HepG2 (cell line): ENCODE measurements at regions of chrX and their contacts with region 1.

Region 1: GRCh38 chrX:71118032-71118984 is at the start of gene MED12:
- DNase-seq: peak; percentile 47
- ATAC-seq: peak; percentile 96
- H3K4me3 ChIP-seq: peak within 1 kb of the TSS; percentile 63 to 75 (median 71)
- H3K27ac ChIP-seq: peak within 1 kb of the TSS; percentile 75
- H3K4me1 ChIP-seq: peaks cover 15% of the 10 kb centered on the region; the same call in 1 of the 2 replicates
- H3K27me3 ChIP-seq: no peaks in the 10 kb centered on the region
- CTCF ChIP-seq: no peak
- EP300 ChIP-seq: no peak
- POLR2A ChIP-seq: peak in 1 of 2 experiments; percentile 46; a peak in 1 of 4 replicates
- RAD21 ChIP-seq: no peak
- total RNA-seq, gene MED12: 15.0 and 16.0 TPM in 2 replicates

Region 2: GRCh38 chrX:71103110-71103983 is 15.0 kb before region 1 on chrX:
- CTCF ChIA-PET with region 1: no interaction called
- POLR2A ChIA-PET with region 1: interaction called, 14 read pairs
- in situ Hi-C with region 1: no loop called
- intact Hi-C with region 1: no loop called
- DNase-seq: no peak
- ATAC-seq: peak; percentile 57
- H3K4me3 ChIP-seq: peak overlapping the region in 1 of 3 experiments; percentile 23; a peak in 2 of 6 replicates
- H3K27ac ChIP-seq: peak overlapping the region; percentile 18
- H3K4me1 ChIP-seq: peaks cover 29% of the 10 kb centered on the region
- H3K27me3 ChIP-seq: no peaks in the 10 kb centered on the region
- CTCF ChIP-seq: no peak
- EP300 ChIP-seq: no peak
- POLR2A ChIP-seq: no peak
- RAD21 ChIP-seq: no peak

Region 3: DNA sequence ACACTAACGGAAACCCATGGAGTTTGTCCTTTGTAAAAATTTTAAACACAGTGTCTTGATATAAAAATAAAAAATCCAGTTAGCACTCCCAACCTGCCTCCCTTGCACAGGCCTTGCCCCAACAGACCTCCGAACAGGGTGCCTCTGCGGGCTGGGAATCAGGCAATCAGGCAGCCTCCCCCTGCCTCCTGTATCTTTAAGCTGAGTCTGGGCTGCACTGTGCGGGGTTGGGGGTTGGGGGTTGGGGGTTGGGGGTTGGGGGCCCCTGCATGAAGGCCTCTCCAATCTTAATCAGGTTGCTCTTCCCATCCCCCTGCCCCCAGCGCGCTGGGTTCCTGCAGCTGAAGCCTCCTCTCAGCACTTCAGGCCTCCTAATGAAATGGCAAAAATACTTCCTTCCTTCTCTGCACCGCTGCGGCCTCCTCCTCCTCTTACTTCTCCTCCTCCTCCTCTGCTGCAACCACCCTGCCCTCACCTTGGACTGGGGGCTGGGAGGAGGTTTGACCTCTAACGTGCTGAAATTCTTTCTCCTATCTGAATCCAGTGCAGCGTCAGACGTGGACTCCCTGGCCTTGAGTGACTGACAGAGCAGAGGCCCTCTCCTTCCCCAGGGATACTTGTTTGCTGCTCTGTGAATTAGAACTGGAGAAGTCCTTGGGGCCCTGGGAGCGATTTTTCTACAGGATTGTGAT is 52.9 kb after region 1 on chrX:
- CTCF ChIA-PET with region 1: no interaction called
- POLR2A ChIA-PET with region 1: no interaction called
- in situ Hi-C with region 1: no loop called
- intact Hi-C with region 1: no loop called
- DNase-seq: no peak
- ATAC-seq: peak; percentile 53; the same call in 2 of the 3 replicates
- H3K4me3 ChIP-seq: no peak overlapping the region
- H3K27ac ChIP-seq: no peak overlapping the region
- H3K4me1 ChIP-seq: peaks cover 32% of the 10 kb centered on the region; the same call in 1 of the 2 replicates
- H3K27me3 ChIP-seq: no peaks in the 10 kb centered on the region
- CTCF ChIP-seq: no peak
- EP300 ChIP-seq: no peak
- POLR2A ChIP-seq: no peak
- RAD21 ChIP-seq: no peak